ENCODE measurements at regions of chr4 and their contacts with region 1.

Region 1: GRCh38 chr4:109559983-109560686 is at the start of gene MCUB:
- DNase-seq: peak; percentile 81 to 96 (median 90)
- ATAC-seq: peak; percentile 87
- H3K4me3 ChIP-seq: peak within 1 kb of the TSS; percentile 96
- H3K4me3 Mint-ChIP-seq: peak within 1 kb of the TSS; percentile 97
- H3K27ac ChIP-seq: peak within 1 kb of the TSS; percentile 91 to 92
- H3K27ac Mint-ChIP-seq: peak within 1 kb of the TSS; percentile 97
- H3K4me1 ChIP-seq: peaks cover 50% of the 10 kb centered on the region
- H3K4me1 Mint-ChIP-seq: peaks cover 58% of the 10 kb centered on the region
- H3K27me3 ChIP-seq: no peaks in the 10 kb centered on the region
- H3K27me3 Mint-ChIP-seq: no peaks in the 10 kb centered on the region
- CTCF ChIP-seq: no peak
- total RNA-seq, gene MCUB: 84.3 to 91.9 TPM

Region 2: DNA sequence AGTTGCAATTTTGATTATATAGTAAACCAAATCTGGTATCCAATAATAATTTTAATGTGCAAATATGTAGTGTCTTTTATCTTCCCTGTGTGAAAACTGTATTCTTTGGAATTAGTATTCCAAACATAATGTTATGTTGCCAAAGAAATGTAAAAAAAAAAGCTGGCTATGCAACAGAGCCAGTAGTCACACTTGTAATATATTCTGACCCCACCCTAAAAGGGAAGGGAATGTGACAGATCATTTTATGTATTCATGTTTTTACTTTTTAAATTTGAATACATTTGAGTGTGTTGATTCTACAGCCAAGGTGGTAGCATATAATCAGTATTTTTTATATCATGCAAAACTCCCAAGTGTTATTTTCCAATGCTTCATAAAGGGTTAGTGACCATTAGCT is 28.0 kb before region 1 on chr4:
- CTCF ChIA-PET with region 1: no interaction called
- POLR2A ChIA-PET with region 1: interaction called, 6 read pairs
- intact Hi-C with region 1: loop called (anchors 2 to 5 kb)
- DNase-seq: no peak
- ATAC-seq: no peak
- H3K4me3 ChIP-seq: no peak overlapping the region
- H3K4me3 Mint-ChIP-seq: no peak overlapping the region
- H3K27ac ChIP-seq: no peak overlapping the region
- H3K27ac Mint-ChIP-seq: peak overlapping the region; percentile 22
- H3K4me1 ChIP-seq: no peaks in the 10 kb centered on the region
- H3K4me1 Mint-ChIP-seq: no peaks in the 10 kb centered on the region
- H3K27me3 ChIP-seq: no peaks in the 10 kb centered on the region
- H3K27me3 Mint-ChIP-seq: no peaks in the 10 kb centered on the region
- CTCF ChIP-seq: no peak

Region 3: GRCh38 chr4:109589605-109590004 is 29.5 kb after region 1 on chr4:
- CTCF ChIA-PET with region 1: no interaction called
- POLR2A ChIA-PET with region 1: interaction called, 5 read pairs
- intact Hi-C with region 1: loop called in 1 of 2 experiments (anchors 2 kb)
- DNase-seq: no peak
- ATAC-seq: no peak
- H3K4me3 ChIP-seq: no peak overlapping the region
- H3K4me3 Mint-ChIP-seq: no peak overlapping the region
- H3K27ac ChIP-seq: no peak overlapping the region
- H3K27ac Mint-ChIP-seq: peak overlapping the region; percentile 58
- H3K4me1 ChIP-seq: peaks cover 36% of the 10 kb centered on the region
- H3K4me1 Mint-ChIP-seq: peaks cover 79% of the 10 kb centered on the region
- H3K27me3 ChIP-seq: no peaks in the 10 kb centered on the region
- H3K27me3 Mint-ChIP-seq: no peaks in the 10 kb centered on the region
- CTCF ChIP-seq: no peak

Region 4: DNA sequence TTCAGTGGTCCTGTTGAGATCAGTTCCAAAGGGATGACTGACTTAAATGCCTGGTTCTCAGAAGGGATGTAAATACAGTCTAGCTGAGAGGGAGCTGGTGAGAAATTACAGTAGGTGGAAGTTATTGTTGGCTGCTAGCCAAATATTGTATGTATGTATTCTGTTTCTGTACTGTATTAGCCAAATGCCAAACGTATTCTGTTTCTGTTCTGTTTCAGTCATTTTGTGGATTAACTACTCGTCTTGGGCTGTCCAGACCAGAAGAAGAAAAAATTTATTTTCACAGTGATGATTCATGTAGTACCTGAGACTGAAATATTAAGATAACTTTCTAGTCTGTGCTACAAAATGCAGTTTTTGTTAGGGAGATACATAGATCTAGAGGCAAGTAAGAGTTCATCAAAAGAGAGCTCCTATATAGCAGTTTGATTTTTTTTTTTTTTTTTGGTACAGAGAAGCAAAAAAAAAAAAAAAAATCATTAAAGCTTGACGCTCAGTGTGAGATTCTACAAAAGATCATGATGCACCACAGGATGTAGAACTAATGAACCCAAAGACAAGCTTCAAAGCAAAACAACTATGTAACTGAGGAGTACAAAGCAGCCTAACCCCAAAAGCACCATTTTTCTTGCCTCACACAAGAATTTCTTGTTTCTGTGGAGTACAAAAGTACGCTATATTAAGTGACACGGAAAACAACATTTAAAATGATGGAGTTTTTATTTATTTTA is 88.3 kb after region 1 on chr4:
- CTCF ChIA-PET with region 1: interaction called, 3 read pairs
- POLR2A ChIA-PET with region 1: interaction called, 42 read pairs
- intact Hi-C with region 1: loop called (anchors 1 to 2 kb)
- DNase-seq: peak in 4 of 9 experiments; percentile 23 to 87 (median 56)
- ATAC-seq: peak; percentile 85
- H3K4me3 ChIP-seq: peak overlapping the region in 1 of 2 experiments; percentile 29
- H3K4me3 Mint-ChIP-seq: peak overlapping the region; percentile 76
- H3K27ac ChIP-seq: peak overlapping the region; percentile 45 to 61
- H3K27ac Mint-ChIP-seq: peak overlapping the region; percentile 92
- H3K4me1 ChIP-seq: peaks cover 73% of the 10 kb centered on the region
- H3K4me1 Mint-ChIP-seq: peaks cover 41% of the 10 kb centered on the region
- H3K27me3 ChIP-seq: no peaks in the 10 kb centered on the region
- H3K27me3 Mint-ChIP-seq: no peaks in the 10 kb centered on the region
- CTCF ChIP-seq: no peak

Region 5: DNA sequence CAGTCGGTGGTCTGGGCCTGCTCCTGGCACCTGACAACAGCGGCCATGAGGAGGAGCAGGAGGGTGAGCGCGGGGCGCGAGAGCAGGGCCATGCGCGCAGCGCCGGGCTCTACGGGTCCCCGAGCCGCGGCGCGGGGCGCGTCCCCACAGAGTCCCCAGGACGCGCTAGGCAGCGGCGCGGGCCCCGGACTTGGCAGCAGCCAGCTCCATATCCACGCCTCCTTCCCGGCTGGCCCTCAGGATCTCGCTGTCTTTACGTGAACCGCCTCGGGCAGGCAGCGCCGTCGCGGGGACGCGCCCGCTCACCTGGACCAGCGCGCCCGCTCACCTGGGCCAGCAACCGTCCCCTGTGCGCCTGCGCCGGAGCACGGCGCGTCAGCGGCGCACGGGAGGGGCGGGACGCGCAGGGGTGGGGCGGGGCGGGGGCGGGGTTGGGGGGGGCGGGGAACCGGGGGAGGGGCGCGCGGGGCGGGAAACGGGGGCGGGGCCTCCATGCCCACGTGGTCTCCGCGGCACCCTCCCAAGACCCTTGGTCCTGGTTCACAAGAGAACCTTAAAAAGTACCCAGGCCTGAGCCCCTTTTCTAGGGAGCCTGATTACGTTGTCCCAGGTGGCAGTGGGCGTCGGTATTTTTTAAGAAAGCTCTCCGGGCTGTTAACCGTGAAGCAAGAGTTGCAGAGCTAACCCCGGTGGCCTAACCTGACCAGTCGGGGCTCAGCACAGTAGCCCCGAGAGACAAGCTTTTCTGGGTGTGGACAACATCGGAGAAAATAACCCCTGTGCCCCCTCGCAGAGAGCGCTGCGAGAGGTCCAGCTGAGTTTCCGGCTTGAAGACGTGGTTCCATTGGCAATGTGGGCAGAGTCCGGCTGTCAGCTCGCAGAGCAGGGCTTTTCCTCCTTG is 169.8 kb after region 1 on chr4 and contains the start of gene PLA2G12A:
- CTCF ChIA-PET with region 1: no interaction called
- POLR2A ChIA-PET with region 1: interaction called, 5 read pairs
- intact Hi-C with region 1: loop called (anchors 1 to 5 kb)
- DNase-seq: peak; percentile 65 to 91 (median 81)
- ATAC-seq: peak; percentile 93
- H3K4me3 ChIP-seq: peak within 1 kb of the TSS; percentile 89 to 92
- H3K4me3 Mint-ChIP-seq: peak within 1 kb of the TSS; percentile 90
- H3K27ac ChIP-seq: peak within 1 kb of the TSS; percentile 69 to 78
- H3K27ac Mint-ChIP-seq: peak within 1 kb of the TSS; percentile 90
- H3K4me1 ChIP-seq: peaks cover 17% of the 10 kb centered on the region
- H3K4me1 Mint-ChIP-seq: peaks cover 27% of the 10 kb centered on the region
- H3K27me3 ChIP-seq: no peaks in the 10 kb centered on the region
- H3K27me3 Mint-ChIP-seq: no peaks in the 10 kb centered on the region
- CTCF ChIP-seq: no peak
- total RNA-seq, gene PLA2G12A: 7.8 to 10.2 TPM

Region 6: GRCh38 chr4:110193822-110194761 is 634.0 kb after region 1 on chr4:
- CTCF ChIA-PET with region 1: no interaction called
- POLR2A ChIA-PET with region 1: no interaction called
- intact Hi-C with region 1: loop called in 1 of 2 experiments (anchors 10 kb)
- DNase-seq: peak; percentile 47 to 90 (median 71)
- ATAC-seq: peak; percentile 86
- H3K4me3 ChIP-seq: no peak overlapping the region
- H3K4me3 Mint-ChIP-seq: no peak overlapping the region
- H3K27ac ChIP-seq: peak overlapping the region; percentile 1 to 63
- H3K27ac Mint-ChIP-seq: peak overlapping the region; percentile 90
- H3K4me1 ChIP-seq: peaks cover 15% of the 10 kb centered on the region
- H3K4me1 Mint-ChIP-seq: peaks cover 36% of the 10 kb centered on the region
- H3K27me3 ChIP-seq: no peaks in the 10 kb centered on the region
- H3K27me3 Mint-ChIP-seq: no peaks in the 10 kb centered on the region
- CTCF ChIP-seq: no peak

Measured in CD8-positive, alpha-beta T cell (primary cell).